ENCODE measurements at regions of chr22 and their contacts with region 1.

Region 1: GRCh38 chr22:17562906-17563870 is at the start of gene SLC25A18:
- DNase-seq: peak; percentile 78
- ATAC-seq: peak; percentile 93
- total RNA-seq, gene SLC25A18: 2.1 TPM

Region 2: DNA sequence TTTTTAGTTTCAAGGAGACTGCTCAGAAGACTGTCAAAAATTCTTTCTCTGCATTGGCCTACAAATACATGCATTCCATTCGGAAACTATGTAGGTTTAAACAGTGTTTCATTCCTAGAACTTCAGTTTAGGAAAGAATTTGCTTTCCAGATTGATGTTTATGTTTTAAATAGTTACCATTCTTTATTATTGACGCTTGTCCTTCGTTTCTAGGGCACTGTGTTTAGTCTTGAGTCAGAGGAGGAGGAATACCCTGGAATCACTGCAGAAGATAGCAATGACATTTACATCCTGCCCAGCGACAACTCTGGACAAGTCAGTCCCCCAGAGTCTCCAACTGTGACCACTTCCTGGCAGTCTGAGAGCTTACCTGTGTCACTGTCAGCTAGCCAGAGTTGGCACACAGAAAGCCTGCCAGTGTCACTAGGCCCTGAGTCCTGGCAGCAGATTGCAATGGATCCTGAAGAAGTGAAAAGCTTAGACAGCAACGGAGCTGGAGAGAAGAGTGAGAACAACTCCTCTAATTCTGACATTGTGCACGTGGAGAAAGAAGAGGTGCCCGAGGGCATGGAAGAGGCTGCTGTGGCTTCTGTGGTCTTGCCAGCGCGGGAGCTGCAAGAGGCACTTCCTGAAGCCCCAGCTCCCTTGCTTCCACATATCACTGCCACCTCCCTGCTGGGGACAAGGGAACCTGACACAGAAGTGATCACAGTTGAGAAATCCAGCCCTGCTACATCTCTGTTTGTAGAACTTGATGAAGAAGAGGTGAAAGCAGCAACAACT is 163.5 kb after region 1 on chr22:
- intact Hi-C with region 1: loop called (anchors 2 kb)
- DNase-seq: no peak
- ATAC-seq: no peak

Measured in Right ventricle myocardium inferior (tissue), 1 donor.